ENCODE measurements at regions of chr9 and their contacts with region 1.

Region 1: GRCh38 chr9:85142968-85143367 is 473.4 kb downstream of the NTRK2 start:
- DNase-seq: no peak
- H3K4me3 ChIP-seq: no peak overlapping the region
- H3K27ac ChIP-seq: no peak overlapping the region
- H3K4me1 ChIP-seq: peaks cover 0 to 13% (median 5%) of the 10 kb centered on the region in 4 donors
- H3K27me3 ChIP-seq: no peaks in the 10 kb centered on the region
- CTCF ChIP-seq: peak; percentile 38 to 41

Region 2: DNA sequence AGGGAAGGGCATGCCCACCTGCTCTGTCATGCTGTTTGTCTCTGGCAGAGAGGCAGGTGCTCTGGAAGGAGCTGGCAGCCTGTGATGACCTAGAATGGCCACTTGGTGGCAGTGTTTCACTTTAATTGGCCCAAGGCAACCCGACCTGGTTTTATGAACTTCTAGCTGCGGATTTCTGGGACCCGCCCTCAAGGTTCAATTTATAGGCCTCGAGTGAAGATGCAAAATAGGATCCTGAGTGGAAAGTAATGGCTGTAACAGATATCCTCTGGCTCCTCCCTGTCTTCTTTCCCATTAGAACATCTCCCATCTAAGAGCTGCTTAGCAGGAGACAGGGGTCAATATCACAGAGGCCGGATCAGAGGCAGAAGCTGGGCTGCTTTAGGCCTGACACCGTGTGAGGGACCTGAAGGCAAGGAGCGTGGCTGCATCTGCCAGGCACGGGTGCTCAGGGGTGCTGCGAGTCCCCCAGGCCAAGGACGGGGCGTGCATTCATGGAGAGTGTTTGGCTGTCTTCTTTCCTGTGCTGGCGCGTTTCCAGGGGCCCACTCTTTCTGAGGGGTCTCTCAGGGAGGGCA is 745.7 kb before region 1 on chr9:
- intact Hi-C with region 1: loop called (anchors 10 kb)
- DNase-seq: peak; percentile 57 to 73
- H3K4me3 ChIP-seq: no peak overlapping the region
- H3K27ac ChIP-seq: no peak overlapping the region
- H3K4me1 ChIP-seq: no peaks in the 10 kb centered on the region
- H3K27me3 ChIP-seq: peaks cover 0 to 19% of the 10 kb centered on the region in 2 donors
- CTCF ChIP-seq: peak; percentile 72 to 91

Region 3: DNA sequence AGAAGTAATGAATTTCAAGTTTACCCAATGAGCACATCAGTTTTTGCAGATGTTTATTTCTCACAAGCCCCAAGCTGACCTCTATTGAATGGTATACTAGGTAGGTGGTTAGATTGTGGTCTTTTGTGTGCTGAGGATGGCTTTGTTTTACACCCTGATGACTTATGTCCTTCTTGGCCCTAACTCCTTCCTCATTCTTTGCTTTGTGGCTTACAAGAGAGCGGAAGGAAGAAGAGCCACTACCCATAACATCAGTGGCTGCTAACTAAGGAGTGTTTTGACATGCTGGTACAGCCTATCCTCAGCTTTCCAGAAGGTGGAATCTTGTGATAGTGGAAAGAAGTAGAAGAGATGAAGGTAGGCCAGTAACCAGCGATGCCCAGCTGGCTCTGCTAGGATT is 559.1 kb before region 1 on chr9:
- intact Hi-C with region 1: no loop called
- DNase-seq: no peak
- H3K4me3 ChIP-seq: no peak overlapping the region
- H3K27ac ChIP-seq: no peak overlapping the region
- H3K4me1 ChIP-seq: no peaks in the 10 kb centered on the region
- H3K27me3 ChIP-seq: no peaks in the 10 kb centered on the region
- CTCF ChIP-seq: no peak

Region 4: DNA sequence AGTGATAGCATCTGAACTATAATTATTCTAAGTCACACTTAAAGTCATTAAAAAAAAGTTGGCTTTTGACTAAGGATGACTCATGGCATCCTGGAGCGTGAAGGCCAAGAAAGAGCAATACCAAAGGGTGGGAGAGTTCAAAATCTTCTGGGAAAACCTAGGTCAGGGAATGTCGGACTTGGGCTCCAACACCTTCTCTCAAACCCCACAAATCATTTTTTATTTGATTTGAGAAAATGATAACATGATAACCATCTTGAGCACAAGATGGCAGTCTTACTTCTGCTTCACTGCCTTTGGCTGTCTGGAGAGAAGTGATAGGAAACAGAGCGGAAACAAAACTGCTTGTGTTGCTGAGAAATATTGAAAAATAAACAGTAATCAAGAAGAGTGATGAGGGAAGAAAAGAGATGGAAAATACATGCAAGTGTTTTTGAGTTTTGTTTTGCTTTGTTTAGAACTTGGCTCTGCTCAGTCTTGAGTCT is 490.3 kb before region 1 on chr9:
- intact Hi-C with region 1: loop called (anchors 10 kb)
- DNase-seq: no peak
- H3K4me3 ChIP-seq: no peak overlapping the region
- H3K27ac ChIP-seq: no peak overlapping the region
- H3K4me1 ChIP-seq: no peaks in the 10 kb centered on the region
- H3K27me3 ChIP-seq: no peaks in the 10 kb centered on the region
- CTCF ChIP-seq: peak in 1 of 2 experiments; percentile 27

Region 5: GRCh38 chr9:84932915-84933527 is 209.9 kb before region 1 on chr9:
- intact Hi-C with region 1: no loop called
- DNase-seq: no peak
- H3K4me3 ChIP-seq: no peak overlapping the region
- H3K27ac ChIP-seq: no peak overlapping the region
- H3K4me1 ChIP-seq: peaks cover 0 to 29% (median 0%) of the 10 kb centered on the region in 4 donors
- H3K27me3 ChIP-seq: no peaks in the 10 kb centered on the region
- CTCF ChIP-seq: peak; percentile 20 to 29

Region 6: DNA sequence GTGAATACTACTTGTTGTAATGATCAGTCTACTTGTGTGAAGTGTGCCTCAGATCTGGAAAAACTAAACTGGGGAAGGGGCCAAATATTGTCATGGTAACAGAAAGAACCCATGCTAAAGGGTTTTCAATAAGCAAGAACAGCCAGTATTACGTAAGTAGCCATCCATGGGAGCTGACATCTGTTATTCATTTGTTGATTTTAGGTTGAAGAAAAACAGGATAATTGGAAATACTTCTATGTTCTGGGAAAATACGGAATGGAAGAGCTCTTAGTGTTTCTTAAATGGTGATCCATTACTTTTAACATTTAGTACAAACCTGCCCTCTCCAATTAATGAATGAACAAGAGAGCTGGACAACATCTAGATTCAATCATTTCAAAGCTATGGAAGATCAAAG is 12.4 kb after region 1 on chr9:
- intact Hi-C with region 1: no loop called
- DNase-seq: no peak
- H3K4me3 ChIP-seq: no peak overlapping the region
- H3K27ac ChIP-seq: no peak overlapping the region
- H3K4me1 ChIP-seq: no peaks in the 10 kb centered on the region
- H3K27me3 ChIP-seq: no peaks in the 10 kb centered on the region
- CTCF ChIP-seq: no peak